Thyroid gland (tissue), 4 donors: ENCODE measurements at regions of chr11 and their contacts with region 1.

Region 1: DNA sequence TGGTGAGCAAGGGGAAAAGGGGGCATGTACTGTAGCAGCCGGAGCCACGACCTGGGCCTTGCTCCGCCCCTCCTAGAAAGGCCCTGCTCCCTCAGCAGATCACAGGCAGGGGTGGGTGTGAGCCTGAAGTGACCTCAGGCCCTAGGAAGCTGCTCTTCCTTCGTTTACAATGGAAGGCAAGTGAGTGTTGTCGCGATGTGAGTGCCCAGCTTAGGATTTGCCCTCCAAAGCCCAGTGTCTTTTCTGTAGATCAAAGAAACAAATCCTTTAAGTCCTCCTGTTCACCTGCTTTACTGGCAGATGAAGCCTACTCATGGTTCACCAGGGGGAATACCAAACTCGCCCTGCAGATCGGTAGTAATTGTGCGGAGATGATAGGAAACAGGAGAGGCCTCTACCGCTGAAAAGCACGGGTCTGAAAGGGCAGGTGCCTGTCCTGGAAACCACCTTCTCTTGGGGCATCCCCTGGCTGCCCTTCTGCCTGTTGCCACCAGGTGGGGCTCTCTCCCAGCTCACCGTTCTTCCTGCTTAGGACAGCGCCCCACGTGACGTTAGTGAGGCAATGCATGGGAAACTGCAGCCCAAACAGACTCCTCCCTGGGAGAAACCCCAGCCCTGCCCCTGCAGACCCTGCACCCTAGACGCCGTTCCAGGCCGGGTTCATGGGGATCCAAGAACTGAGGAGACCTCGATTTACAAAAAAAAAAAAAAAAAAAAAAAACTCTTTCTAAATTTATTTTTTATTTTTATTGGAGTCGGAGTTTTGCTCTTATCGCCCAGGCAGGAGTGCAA is 45.9 kb upstream of the RAB1B start:
- DNase-seq: peak; percentile 92 to 93
- H3K4me3 ChIP-seq: no peak overlapping the region
- H3K27ac ChIP-seq: no peak overlapping the region
- H3K4me1 ChIP-seq: no peaks in the 10 kb centered on the region
- H3K27me3 ChIP-seq: no peaks in the 10 kb centered on the region
- CTCF ChIP-seq: peak; percentile 98 to 100 (median 100)
- POLR2A ChIP-seq: no peak

Region 2: GRCh38 chr11:66069715-66070603 is 152.6 kb before region 1 on chr11 and contains the start of gene PACS1:
- intact Hi-C with region 1: loop called (anchors 10 kb)
- DNase-seq: peak; percentile 75 to 79
- H3K4me3 ChIP-seq: peak within 1 kb of the TSS; percentile 35 to 99 (median 70)
- H3K27ac ChIP-seq: peak within 1 kb of the TSS; percentile 92 to 98 (median 97)
- H3K4me1 ChIP-seq: peaks cover 27 to 31% of the 10 kb centered on the region in 2 donors
- H3K27me3 ChIP-seq: no peaks in the 10 kb centered on the region
- CTCF ChIP-seq: peak in 2 of 6 experiments; percentile 11 to 16
- POLR2A ChIP-seq: peak; percentile 6 to 79
- total RNA-seq, gene PACS1: 39.6 to 67.7 (median 59.7) TPM

Region 3: DNA sequence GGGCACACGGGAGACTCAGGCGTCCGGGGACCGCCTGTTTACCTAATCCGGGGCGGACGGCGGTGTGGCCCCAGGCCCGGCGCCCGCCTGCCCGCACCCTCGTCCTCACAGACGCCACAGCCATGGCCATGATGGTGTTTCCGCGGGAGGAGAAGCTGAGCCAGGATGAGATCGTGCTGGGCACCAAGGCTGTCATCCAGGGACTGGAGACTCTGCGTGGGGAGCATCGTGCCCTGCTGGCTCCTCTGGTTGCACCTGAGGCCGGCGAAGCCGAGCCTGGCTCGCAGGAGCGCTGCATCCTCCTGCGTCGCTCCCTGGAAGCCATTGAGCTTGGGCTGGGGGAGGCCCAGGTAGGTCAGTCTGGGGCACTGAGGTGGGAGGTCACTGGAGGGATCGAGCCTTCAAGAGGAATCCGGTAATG is 35.9 kb after region 1 on chr11:
- intact Hi-C with region 1: loop called (anchors 2 kb)
- DNase-seq: no peak
- H3K4me3 ChIP-seq: peak overlapping the region in 2 of 3 donors; percentile 69 to 91
- H3K27ac ChIP-seq: peak overlapping the region in 2 of 3 donors; percentile 43 to 57
- H3K4me1 ChIP-seq: peaks cover 9 to 16% of the 10 kb centered on the region in 2 donors
- H3K27me3 ChIP-seq: no peaks in the 10 kb centered on the region
- CTCF ChIP-seq: no peak
- POLR2A ChIP-seq: no peak

Region 4: GRCh38 chr11:66282468-66283386 is 60.2 kb after region 1 on chr11:
- intact Hi-C with region 1: loop called (anchors 2 kb)
- DNase-seq: peak; percentile 99
- H3K4me3 ChIP-seq: no peak overlapping the region
- H3K27ac ChIP-seq: no peak overlapping the region
- H3K4me1 ChIP-seq: peaks cover 5 to 12% of the 10 kb centered on the region in 2 donors
- H3K27me3 ChIP-seq: no peaks in the 10 kb centered on the region
- CTCF ChIP-seq: peak; percentile 87 to 99 (median 96)
- POLR2A ChIP-seq: no peak

Region 5: GRCh38 chr11:66580803-66581202 is 358.2 kb after region 1 on chr11:
- intact Hi-C with region 1: no loop called
- DNase-seq: no peak
- H3K4me3 ChIP-seq: no peak overlapping the region
- H3K27ac ChIP-seq: no peak overlapping the region
- H3K4me1 ChIP-seq: no peaks in the 10 kb centered on the region
- H3K27me3 ChIP-seq: no peaks in the 10 kb centered on the region
- CTCF ChIP-seq: no peak
- POLR2A ChIP-seq: no peak